Mammary epithelial cell (primary cell): ENCODE measurements at regions of chr2 and their contacts with region 1.

Region 1: DNA sequence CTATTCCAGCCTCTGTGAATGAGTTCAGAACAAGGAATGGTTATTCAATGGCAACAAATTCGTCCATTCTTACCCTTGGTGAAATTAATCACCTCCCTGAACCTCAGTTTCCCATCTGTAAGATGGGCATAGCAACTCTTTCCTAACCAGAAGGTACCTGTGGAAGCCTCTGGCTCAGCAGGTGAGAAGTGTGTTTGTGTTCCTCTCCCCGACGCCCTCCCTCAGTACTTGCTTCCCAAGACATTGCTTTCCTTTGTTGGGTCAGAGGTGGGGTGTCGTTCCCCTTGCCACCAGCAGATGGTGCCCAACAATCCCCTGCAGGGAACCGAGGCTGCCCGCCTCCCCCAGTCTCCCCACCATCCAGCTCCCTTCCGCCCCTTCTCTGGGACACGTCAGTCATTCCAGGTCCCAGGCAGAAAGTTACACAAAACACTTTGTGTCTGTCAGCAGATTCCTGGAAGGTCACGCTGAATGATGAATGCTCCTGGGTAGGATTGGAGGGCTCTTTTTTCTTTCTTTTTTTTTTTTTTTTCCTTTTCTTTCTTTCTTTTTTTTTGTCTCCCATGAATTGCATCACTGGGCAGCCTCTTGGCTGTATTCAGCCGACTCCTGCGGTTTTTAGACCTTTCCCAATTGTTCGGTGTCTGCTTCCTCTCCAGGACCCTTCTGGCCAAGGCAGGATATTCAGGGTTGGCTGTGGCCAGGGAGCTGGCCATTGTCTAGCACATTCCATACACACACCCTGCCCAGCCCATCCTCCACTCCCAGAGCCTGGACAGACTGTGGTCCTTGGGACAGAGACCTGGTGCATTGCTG is 117.3 kb downstream of the LPIN1 start:
- DNase-seq: peak; percentile 77
- H3K4me3 ChIP-seq: no peak overlapping the region
- H3K27ac ChIP-seq: no peak overlapping the region
- H3K4me1 ChIP-seq: peaks cover 15% of the 10 kb centered on the region
- H3K27me3 ChIP-seq: no peaks in the 10 kb centered on the region
- CTCF ChIP-seq: peak; percentile 88 to 98

Region 2: GRCh38 chr2:11829947-11830707 is 33.6 kb before region 1 on chr2:
- CTCF ChIA-PET with region 1: no interaction called
- dilution Hi-C with region 1: no loop called
- in situ Hi-C with region 1: no loop called
- intact Hi-C with region 1: loop called (anchors 1 kb)
- DNase-seq: peak; percentile 98
- H3K4me3 ChIP-seq: peak overlapping the region; percentile 26 to 39 (median 35)
- H3K27ac ChIP-seq: peak overlapping the region; percentile 83
- H3K4me1 ChIP-seq: peaks cover 37% of the 10 kb centered on the region
- H3K27me3 ChIP-seq: no peaks in the 10 kb centered on the region
- CTCF ChIP-seq: peak; percentile 32 to 71

Region 3: DNA sequence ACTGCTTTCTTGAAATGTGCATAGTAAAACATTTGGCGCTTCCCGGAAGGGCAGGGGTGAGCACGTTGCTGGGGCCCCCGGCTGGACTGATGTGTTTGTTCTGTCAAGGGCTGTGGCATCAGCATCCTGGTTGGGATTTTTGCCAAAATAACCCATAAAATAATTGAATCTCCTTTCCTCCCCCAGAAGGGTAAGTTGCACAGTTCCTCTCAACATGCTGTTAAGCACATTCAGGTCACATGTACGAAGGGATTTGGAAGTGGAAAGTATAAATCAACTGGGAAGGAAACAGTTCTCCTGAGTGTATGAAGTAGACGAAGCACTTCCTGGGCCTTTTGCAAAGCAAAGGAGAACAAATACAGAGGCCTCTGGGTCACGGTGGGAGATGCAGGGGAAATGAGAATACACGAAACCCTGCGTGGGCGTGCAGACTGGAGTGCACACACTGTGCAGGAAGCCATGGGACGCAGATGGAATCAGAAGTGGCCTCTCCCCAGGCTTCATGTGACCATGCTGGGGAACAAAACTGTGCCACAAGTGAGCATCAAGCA is 66.6 kb after region 1 on chr2:
- CTCF ChIA-PET with region 1: no interaction called
- dilution Hi-C with region 1: no loop called
- in situ Hi-C with region 1: no loop called
- intact Hi-C with region 1: no loop called
- DNase-seq: no peak
- H3K4me3 ChIP-seq: no peak overlapping the region
- H3K27ac ChIP-seq: no peak overlapping the region
- H3K4me1 ChIP-seq: no peaks in the 10 kb centered on the region
- H3K27me3 ChIP-seq: no peaks in the 10 kb centered on the region
- CTCF ChIP-seq: no peak

Region 4: GRCh38 chr2:12044857-12045256 is 181.1 kb after region 1 on chr2:
- CTCF ChIA-PET with region 1: no interaction called
- dilution Hi-C with region 1: no loop called
- in situ Hi-C with region 1: no loop called
- intact Hi-C with region 1: loop called (anchors 5 kb)
- DNase-seq: no peak
- H3K4me3 ChIP-seq: no peak overlapping the region
- H3K27ac ChIP-seq: no peak overlapping the region
- H3K4me1 ChIP-seq: peaks cover 10% of the 10 kb centered on the region
- H3K27me3 ChIP-seq: no peaks in the 10 kb centered on the region
- CTCF ChIP-seq: no peak

Region 5: GRCh38 chr2:12176623-12177454 is 313.1 kb after region 1 on chr2:
- CTCF ChIA-PET with region 1: no interaction called
- dilution Hi-C with region 1: no loop called
- in situ Hi-C with region 1: no loop called
- intact Hi-C with region 1: loop called (anchors 1 kb)
- DNase-seq: peak; percentile 49
- H3K4me3 ChIP-seq: no peak overlapping the region
- H3K27ac ChIP-seq: no peak overlapping the region
- H3K4me1 ChIP-seq: peaks cover 20% of the 10 kb centered on the region
- H3K27me3 ChIP-seq: no peaks in the 10 kb centered on the region
- CTCF ChIP-seq: no peak

Region 6: GRCh38 chr2:12931186-12931844 is 1067.6 kb after region 1 on chr2:
- CTCF ChIA-PET with region 1: interaction called, 7 read pairs
- dilution Hi-C with region 1: no loop called
- in situ Hi-C with region 1: no loop called
- intact Hi-C with region 1: loop called (anchors 1 kb)
- DNase-seq: peak; percentile 35
- H3K4me3 ChIP-seq: no peak overlapping the region
- H3K27ac ChIP-seq: no peak overlapping the region
- H3K4me1 ChIP-seq: peaks cover 23% of the 10 kb centered on the region
- H3K27me3 ChIP-seq: no peaks in the 10 kb centered on the region
- CTCF ChIP-seq: peak; percentile 88 to 96